BJ (cell line): ENCODE measurements at regions of chrX and their contacts with region 1.

Region 1: DNA sequence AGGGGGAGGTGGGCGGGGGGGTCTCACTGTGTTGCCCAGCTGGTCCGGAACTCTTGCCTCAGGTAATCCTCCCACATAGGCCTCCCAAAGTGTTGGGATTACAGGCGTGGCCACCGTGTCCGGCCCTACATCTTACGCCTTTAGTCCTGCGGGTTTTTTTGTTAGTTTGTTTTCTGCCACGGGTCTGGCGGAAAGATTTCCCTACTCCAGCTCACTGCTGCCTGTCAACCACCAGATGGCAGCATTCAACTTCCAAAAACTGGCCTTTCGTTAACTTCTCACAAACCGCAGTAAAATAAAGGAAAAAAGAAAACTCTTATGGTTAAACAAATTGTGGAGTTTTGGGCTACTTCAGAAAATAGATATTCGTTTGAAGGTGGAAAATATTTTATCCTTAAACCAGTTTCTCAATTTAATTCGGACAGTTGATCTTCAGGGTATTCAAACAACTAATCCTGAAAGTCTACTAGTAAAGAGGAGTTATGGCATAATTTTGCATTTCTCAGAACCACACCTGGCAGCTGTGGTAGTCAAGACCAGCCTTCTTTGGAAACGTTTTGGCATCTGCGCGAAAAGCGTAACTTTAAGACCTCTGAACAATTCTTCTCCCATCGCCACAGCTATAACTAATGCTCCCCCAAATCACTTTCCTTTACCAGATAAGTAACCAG is 41.1 kb downstream of the LUZP4 start:
- DNase-seq: no peak
- H3K4me3 ChIP-seq: no peak overlapping the region
- H3K27me3 ChIP-seq: no peaks in the 10 kb centered on the region
- CTCF ChIP-seq: peak; percentile 68

Region 2: DNA sequence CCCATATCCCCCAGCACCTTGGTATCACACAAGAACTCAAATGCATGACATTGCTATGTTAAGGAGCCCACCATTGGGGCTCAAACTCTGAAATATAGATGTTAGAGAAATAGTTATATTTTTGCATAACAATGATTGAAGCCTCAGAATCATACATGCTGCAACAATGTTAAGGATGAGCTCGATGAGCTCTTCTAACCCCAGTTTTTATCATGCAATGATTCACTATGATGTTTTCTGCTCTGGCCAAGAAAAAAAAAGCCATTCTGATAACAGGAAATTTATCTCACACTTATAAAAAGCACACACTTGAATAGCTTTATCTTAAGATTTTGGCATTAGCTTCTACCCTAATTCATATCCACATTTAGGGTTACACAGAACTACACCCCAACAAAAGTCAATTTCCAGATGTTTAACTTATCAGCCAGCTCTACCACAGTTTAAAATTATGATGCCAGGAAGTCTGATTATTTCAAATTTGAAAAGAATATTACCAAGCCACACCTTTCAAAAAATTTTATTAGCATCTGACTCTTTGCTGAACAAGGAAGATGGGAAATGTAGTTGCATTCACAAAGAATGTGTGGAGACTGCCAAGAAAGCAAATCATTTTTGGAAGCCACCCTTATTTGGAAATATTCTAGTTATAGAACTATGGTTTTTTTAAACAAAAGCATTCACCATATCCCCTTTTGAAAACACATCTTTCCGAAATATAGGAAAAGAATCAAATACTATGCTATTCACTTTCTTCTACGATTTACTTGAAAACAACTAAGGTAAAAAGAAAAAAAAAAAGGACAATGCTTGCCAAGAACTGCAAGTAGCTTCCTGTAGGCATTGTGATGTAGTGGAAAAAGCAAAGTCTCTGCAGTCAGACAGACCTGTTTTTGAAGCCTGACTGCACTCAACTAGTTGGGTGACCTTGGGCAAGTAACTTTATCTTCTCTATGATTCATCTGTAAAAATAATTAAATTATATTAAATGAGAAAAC is 129.5 kb after region 1 on chrX:
- CTCF ChIA-PET with region 1: no interaction called
- POLR2A ChIA-PET with region 1: no interaction called
- DNase-seq: peak; percentile 2
- H3K4me3 ChIP-seq: no peak overlapping the region
- H3K27me3 ChIP-seq: no peaks in the 10 kb centered on the region
- CTCF ChIP-seq: no peak

Region 3: DNA sequence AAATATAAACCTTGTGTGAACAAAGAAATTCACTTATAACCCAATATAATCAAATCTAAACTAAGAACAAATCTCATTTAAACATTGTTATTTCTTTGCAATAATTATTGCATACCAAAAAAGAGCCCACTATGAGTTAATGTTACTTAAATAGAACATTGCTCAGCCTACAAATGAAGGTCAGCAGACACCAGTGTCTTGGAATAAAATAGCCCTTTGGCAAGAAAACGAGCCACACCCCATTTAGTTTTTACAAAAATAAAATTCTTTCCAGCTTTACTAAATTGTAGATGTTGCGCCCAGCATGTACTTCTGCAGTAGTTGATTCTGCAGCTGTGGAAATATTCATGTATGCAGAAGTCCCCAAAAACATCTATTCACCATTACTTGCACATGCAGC is 242.6 kb after region 1 on chrX:
- CTCF ChIA-PET with region 1: no interaction called
- POLR2A ChIA-PET with region 1: no interaction called
- DNase-seq: no peak
- H3K4me3 ChIP-seq: no peak overlapping the region
- H3K27me3 ChIP-seq: no peaks in the 10 kb centered on the region
- CTCF ChIP-seq: no peak

Region 4: GRCh38 chrX:115642895-115643530 is 312.4 kb after region 1 on chrX:
- CTCF ChIA-PET with region 1: interaction called, 20 read pairs
- POLR2A ChIA-PET with region 1: interaction called, 7 read pairs
- DNase-seq: peak; percentile 39
- H3K4me3 ChIP-seq: no peak overlapping the region
- H3K27me3 ChIP-seq: no peaks in the 10 kb centered on the region
- CTCF ChIP-seq: peak; percentile 66

Region 5: GRCh38 chrX:115690511-115691216 is 360.0 kb after region 1 on chrX:
- CTCF ChIA-PET with region 1: interaction called, 14 read pairs
- POLR2A ChIA-PET with region 1: no interaction called
- DNase-seq: peak; percentile 33
- H3K4me3 ChIP-seq: no peak overlapping the region
- H3K27me3 ChIP-seq: no peaks in the 10 kb centered on the region
- CTCF ChIP-seq: peak; percentile 65